ENCODE measurements at regions of chr7 and their contacts with region 1.

Region 1: DNA sequence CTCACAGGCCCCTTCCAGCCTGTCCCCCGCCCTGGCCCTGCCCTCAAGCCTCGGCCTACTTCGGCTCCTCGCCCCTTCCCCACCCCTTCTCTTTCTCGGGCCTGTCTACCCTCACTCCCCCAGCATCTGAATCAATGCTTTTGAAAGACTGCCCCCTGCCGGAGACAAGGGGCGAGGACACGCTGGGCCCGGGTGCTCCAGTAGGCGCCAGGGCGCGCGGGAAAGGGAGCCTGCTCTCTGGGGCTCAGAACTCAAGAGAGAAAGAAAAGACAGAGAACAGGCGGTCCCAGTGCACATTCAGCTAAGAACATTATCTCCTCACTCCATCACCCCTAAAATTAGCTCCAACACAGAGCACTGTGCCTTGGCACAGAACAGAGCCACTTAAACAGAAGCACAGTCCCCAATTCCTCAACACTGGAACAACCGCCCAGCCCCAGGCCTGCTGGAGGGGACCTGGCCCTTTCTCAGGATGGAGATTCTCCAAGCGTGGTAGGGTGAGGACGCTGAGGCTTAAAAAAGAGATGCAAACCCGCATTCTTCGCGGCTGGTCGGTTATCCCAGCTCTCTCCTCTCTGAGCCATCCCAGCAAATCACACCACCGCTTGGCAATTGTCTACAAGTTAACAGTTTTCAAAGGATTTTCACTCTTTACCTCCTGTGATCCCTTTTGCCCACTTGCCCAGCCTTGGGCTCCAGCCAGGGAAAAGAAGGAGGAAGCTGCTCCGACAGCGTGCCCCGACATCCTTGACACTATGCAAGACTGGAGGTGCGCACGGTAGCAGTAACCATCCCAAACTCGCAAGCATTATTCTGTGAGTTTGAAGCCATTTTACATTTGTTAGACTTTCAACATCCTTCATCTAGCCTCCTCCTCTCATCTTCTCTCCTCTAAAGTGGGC is 2.1 kb downstream of the GIGYF1 start:
- DNase-seq: peak; percentile 87
- H3K4me3 ChIP-seq: peak overlapping the region in 1 of 2 donors; percentile 2
- H3K27ac ChIP-seq: peak overlapping the region; percentile 21 to 96
- H3K4me1 ChIP-seq: peaks cover 54% of the 10 kb centered on the region
- H3K27me3 ChIP-seq: no peaks in the 10 kb centered on the region
- CTCF ChIP-seq: peak; percentile 85 to 88 (median 87)
- POLR2A ChIP-seq: no peak

Region 2: GRCh38 chr7:99551332-99551731 is 1140.6 kb before region 1 on chr7:
- intact Hi-C with region 1: no loop called
- DNase-seq: no peak
- H3K4me3 ChIP-seq: peak overlapping the region; percentile 85 to 98
- H3K27ac ChIP-seq: peak overlapping the region; percentile 84 to 90
- H3K4me1 ChIP-seq: peaks cover 9% of the 10 kb centered on the region
- H3K27me3 ChIP-seq: no peaks in the 10 kb centered on the region
- CTCF ChIP-seq: no peak
- POLR2A ChIP-seq: no peak

Region 3: GRCh38 chr7:100469227-100470044 is 222.5 kb before region 1 on chr7:
- intact Hi-C with region 1: loop called (anchors 5 kb)
- DNase-seq: peak; percentile 93
- H3K4me3 ChIP-seq: no peak overlapping the region
- H3K27ac ChIP-seq: no peak overlapping the region
- H3K4me1 ChIP-seq: peaks cover 45% of the 10 kb centered on the region
- H3K27me3 ChIP-seq: no peaks in the 10 kb centered on the region
- CTCF ChIP-seq: peak; percentile 88 to 98 (median 97)
- POLR2A ChIP-seq: no peak

Region 4: DNA sequence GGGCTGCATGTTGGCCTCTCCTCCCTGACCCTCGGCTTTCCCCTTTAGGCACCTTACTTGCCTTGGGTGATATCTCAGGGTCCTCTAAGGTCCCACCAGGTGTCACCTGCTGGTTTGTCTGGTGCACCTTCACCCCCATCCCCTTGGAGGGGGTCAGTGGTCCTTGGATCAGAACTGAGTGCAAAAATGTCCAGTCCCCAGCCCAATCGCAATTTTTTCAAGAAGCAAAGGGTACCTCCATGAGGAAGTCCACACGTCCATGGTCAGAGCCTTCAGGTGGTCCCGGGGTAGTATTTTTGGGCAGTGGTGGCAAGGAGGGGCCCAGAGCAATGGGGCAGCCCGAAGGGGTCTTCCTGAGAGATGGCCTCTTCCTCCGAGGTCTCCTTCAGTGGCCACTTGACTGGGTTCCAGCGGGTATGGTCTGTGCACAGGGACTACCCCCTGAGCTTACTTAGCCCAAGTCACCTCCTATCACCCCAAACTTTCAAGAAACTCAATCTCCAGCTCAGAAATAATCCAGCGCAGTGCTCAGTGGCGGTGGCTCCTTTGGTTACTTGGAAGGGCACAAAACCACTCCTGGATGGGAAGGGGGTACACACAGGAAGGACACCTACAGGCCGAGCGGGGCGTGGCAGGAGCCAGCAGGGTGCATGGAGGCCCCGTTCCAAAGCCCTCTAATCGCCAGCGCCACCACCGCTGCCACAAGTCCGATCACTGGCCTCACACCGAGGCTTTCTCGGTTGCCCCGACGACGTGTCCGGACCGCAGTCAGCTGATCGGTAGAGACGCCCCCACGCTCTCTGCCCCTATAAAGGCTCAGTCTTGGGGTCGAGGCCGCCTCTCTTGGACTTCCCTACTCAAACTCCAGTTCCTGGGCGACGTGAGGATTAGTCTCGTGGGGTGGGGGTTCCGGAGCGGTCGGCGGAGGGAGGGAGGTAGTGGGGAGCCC is 122.8 kb before region 1 on chr7:
- intact Hi-C with region 1: loop called (anchors 5 kb)
- DNase-seq: peak; percentile 86
- H3K4me3 ChIP-seq: peak overlapping the region; percentile 41 to 56
- H3K27ac ChIP-seq: peak overlapping the region; percentile 81 to 83
- H3K4me1 ChIP-seq: peaks cover 38% of the 10 kb centered on the region
- H3K27me3 ChIP-seq: no peaks in the 10 kb centered on the region
- CTCF ChIP-seq: peak; percentile 10 to 29 (median 20)
- POLR2A ChIP-seq: no peak

Measured in testis (tissue), 5 donors.